GM12878 (cell line): ENCODE measurements at regions of chr22 and their contacts with region 1.

Region 1: GRCh38 chr22:37933711-37934376 is 19.6 kb downstream of the C22orf23 start:
- DNase-seq: peak; percentile 28
- ATAC-seq: peak; percentile 100
- H3K4me3 ChIP-seq: no peak overlapping the region
- H3K27ac ChIP-seq: no peak overlapping the region
- H3K4me1 ChIP-seq: peaks cover 10% of the 10 kb centered on the region
- H3K27me3 ChIP-seq: no peaks in the 10 kb centered on the region
- CTCF ChIP-seq: peak; percentile 98; a peak in 5 of 6 replicates
- EP300 ChIP-seq: no peak
- POLR2A ChIP-seq: no peak
- RAD21 ChIP-seq: peak; percentile 60

Region 2: GRCh38 chr22:37538590-37539357 is 395.1 kb before region 1 on chr22:
- CTCF ChIA-PET with region 1: no interaction called
- POLR2A ChIA-PET with region 1: no interaction called
- RAD21 ChIA-PET with region 1: no interaction called
- SMC1A ChIA-PET with region 1: no interaction called
- in situ Hi-C with region 1: no loop called
- intact Hi-C with region 1: loop called (anchors 10 kb)
- DNase-seq: peak; percentile 80
- ATAC-seq: peak; percentile 98
- H3K4me3 ChIP-seq: no peak overlapping the region
- H3K27ac ChIP-seq: no peak overlapping the region
- H3K4me1 ChIP-seq: peaks cover 27% of the 10 kb centered on the region
- H3K27me3 ChIP-seq: no peaks in the 10 kb centered on the region
- CTCF ChIP-seq: peak; percentile 96 to 99 (median 96)
- EP300 ChIP-seq: peak in 1 of 2 experiments; percentile 37; a peak in 1 of 4 replicates
- POLR2A ChIP-seq: no peak
- RAD21 ChIP-seq: peak; percentile 96

Region 3: GRCh38 chr22:37887610-37888378 is 46.0 kb before region 1 on chr22:
- CTCF ChIA-PET with region 1: no interaction called
- POLR2A ChIA-PET with region 1: no interaction called
- RAD21 ChIA-PET with region 1: no interaction called
- SMC1A ChIA-PET with region 1: no interaction called
- in situ Hi-C with region 1: no loop called
- intact Hi-C with region 1: loop called (anchors 5 kb)
- DNase-seq: no peak
- ATAC-seq: peak; percentile 42; the same call in 1 of the 3 replicates
- H3K4me3 ChIP-seq: no peak overlapping the region
- H3K27ac ChIP-seq: no peak overlapping the region
- H3K4me1 ChIP-seq: no peaks in the 10 kb centered on the region
- H3K27me3 ChIP-seq: no peaks in the 10 kb centered on the region
- CTCF ChIP-seq: peak; percentile 13 to 35 (median 13); a peak in 3 of 6 replicates
- EP300 ChIP-seq: no peak
- POLR2A ChIP-seq: peak; percentile 38; the same call in 1 of the 2 replicates
- RAD21 ChIP-seq: peak; percentile 34; the same call in 1 of the 2 replicates

Region 4: GRCh38 chr22:37905534-37906363 is 28.1 kb before region 1 on chr22 and contains the start of gene MICALL1:
- CTCF ChIA-PET with region 1: interaction called, 13 read pairs
- POLR2A ChIA-PET with region 1: no interaction called
- RAD21 ChIA-PET with region 1: no interaction called
- SMC1A ChIA-PET with region 1: no interaction called
- in situ Hi-C with region 1: no loop called
- intact Hi-C with region 1: loop called (anchors 2 kb)
- DNase-seq: no peak
- ATAC-seq: peak; percentile 96
- H3K4me3 ChIP-seq: peak within 1 kb of the TSS; percentile 85
- H3K27ac ChIP-seq: peak within 1 kb of the TSS; percentile 59
- H3K4me1 ChIP-seq: no peaks in the 10 kb centered on the region
- H3K27me3 ChIP-seq: no peaks in the 10 kb centered on the region
- CTCF ChIP-seq: peak in 2 of 3 experiments; percentile 17 to 60; a peak in 3 of 6 replicates
- EP300 ChIP-seq: no peak
- POLR2A ChIP-seq: peak; percentile 63
- RAD21 ChIP-seq: peak; percentile 36; the same call in 1 of the 2 replicates
- polyA plus RNA-seq, gene MICALL1: 0.72 to 2.0 TPM